Naive thymus-derived CD4-positive, alpha-beta T cell (primary cell): ENCODE measurements at regions of chr3 and their contacts with region 1.

Region 1: DNA sequence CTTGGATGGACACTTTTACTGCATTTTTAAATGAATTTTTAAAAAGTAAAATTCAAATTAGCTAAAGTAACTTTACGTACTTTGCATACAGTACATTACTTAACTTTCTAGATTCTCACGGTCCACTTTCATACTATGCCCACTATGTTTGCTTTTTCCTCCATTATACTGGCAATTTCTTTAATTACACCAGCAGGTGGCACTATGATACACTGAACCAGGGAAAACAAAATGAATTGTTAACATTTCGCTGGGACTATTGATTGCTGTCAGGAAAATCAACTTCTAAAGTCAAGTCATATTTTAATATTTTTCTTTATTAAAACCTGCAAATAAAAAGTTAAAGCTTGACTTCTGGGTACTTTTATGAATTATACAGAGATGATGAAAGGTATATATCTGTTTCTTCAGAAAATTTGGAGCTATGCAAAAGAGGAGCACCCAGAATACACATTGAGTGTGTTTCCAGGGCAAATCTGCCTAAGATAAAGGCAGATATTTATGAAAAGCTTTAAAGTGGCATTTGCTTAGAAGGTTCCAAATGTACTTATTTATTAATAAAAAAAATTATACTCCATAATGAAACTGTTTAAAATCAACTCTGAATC is 21.8 kb upstream of the POU1F1 start:
- DNase-seq: peak in 5 of 9 donors; percentile 24 to 38 (median 28)
- ATAC-seq: peak; percentile 67
- H3K4me3 ChIP-seq: no peak overlapping the region
- H3K4me3 Mint-ChIP-seq: no peak overlapping the region
- H3K27ac ChIP-seq: no peak overlapping the region
- H3K27ac Mint-ChIP-seq: no peak overlapping the region
- H3K4me1 ChIP-seq: no peaks in the 10 kb centered on the region
- H3K4me1 Mint-ChIP-seq: peaks cover 0 to 4% (median 0%) of the 10 kb centered on the region in 7 donors
- H3K27me3 ChIP-seq: no peaks in the 10 kb centered on the region
- H3K27me3 Mint-ChIP-seq: peaks cover 0 to 9% (median 0%) of the 10 kb centered on the region in 5 donors

Region 2: GRCh38 chr3:87350364-87351199 is 52.4 kb after region 1 on chr3:
- CTCF ChIA-PET with region 1: interaction called, 3 read pairs
- POLR2A ChIA-PET with region 1: no interaction called
- intact Hi-C with region 1: loop called in 1 of 2 experiments (anchors 1 kb)
- DNase-seq: peak in 7 of 9 donors; percentile 11 to 66 (median 47)
- ATAC-seq: peak; percentile 94
- H3K4me3 ChIP-seq: no peak overlapping the region
- H3K4me3 Mint-ChIP-seq: no peak overlapping the region
- H3K27ac ChIP-seq: no peak overlapping the region
- H3K27ac Mint-ChIP-seq: no peak overlapping the region
- H3K4me1 ChIP-seq: no peaks in the 10 kb centered on the region
- H3K4me1 Mint-ChIP-seq: no peaks in the 10 kb centered on the region
- H3K27me3 ChIP-seq: no peaks in the 10 kb centered on the region
- H3K27me3 Mint-ChIP-seq: peaks cover 0 to 8% (median 4%) of the 10 kb centered on the region in 5 donors

Region 3: DNA sequence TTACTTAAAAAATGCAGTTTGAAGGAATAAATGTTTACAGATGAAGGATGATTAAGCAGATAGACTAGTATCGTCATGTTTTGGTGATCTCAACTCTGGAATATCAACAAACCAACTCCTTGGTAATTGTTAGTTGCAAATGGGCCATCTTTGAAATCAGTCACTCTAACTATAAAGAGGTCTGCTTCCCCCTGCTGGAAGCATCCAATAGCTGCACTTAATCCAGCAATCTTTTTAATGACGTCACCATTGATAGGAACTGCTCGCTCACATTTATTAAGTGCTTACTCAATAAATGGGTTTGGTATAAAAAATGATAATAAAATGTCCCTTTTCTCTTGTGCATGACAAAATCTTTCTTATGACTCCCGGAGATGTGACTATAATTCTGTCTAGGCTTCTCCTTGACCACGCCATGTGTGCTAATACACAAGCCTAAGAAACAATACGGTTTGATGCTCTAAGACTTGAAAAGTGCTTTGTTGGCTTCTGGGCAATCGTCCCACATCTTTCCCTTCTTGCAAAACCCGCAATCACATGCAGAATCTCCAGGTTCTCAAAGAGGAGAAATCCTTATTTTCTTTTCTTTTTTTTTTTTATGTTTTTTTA is 205.8 kb after region 1 on chr3:
- CTCF ChIA-PET with region 1: no interaction called
- POLR2A ChIA-PET with region 1: no interaction called
- intact Hi-C with region 1: loop called in 1 of 2 experiments (anchors 1 kb)
- DNase-seq: peak in 1 of 9 donors; percentile 11
- ATAC-seq: peak; percentile 57
- H3K4me3 ChIP-seq: no peak overlapping the region
- H3K4me3 Mint-ChIP-seq: no peak overlapping the region
- H3K27ac ChIP-seq: no peak overlapping the region
- H3K27ac Mint-ChIP-seq: no peak overlapping the region
- H3K4me1 ChIP-seq: no peaks in the 10 kb centered on the region
- H3K4me1 Mint-ChIP-seq: no peaks in the 10 kb centered on the region
- H3K27me3 ChIP-seq: no peaks in the 10 kb centered on the region
- H3K27me3 Mint-ChIP-seq: no peaks in the 10 kb centered on the region

Region 4: DNA sequence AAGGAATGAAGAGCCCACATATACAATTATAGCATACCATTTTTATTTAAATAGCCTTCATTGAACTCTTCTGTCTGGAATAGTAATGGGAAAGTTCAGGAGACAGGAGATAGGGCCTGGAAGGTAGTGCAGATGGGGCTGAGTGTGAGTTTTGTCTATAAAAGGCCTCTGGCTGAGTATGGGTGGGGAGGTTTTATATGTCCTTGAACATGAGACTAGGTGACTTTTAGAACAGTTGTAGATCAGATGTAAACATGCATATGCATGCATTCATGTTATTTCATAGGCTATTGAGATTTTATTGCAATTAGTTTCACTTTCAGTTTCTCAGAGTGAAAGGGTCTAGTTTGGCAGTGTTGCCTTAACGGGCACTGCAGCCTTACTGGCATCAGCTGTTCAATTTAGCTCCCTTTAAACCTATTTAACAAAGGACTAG is 733.4 kb after region 1 on chr3:
- CTCF ChIA-PET with region 1: no interaction called
- POLR2A ChIA-PET with region 1: no interaction called
- intact Hi-C with region 1: no loop called
- DNase-seq: peak in 7 of 9 donors; percentile 29 to 54 (median 38)
- ATAC-seq: peak; percentile 76
- H3K4me3 ChIP-seq: peak overlapping the region; percentile 59
- H3K4me3 Mint-ChIP-seq: peak overlapping the region; percentile 78 to 91 (median 86)
- H3K27ac ChIP-seq: peak overlapping the region; percentile 66
- H3K27ac Mint-ChIP-seq: peak overlapping the region; percentile 82 to 95 (median 88)
- H3K4me1 ChIP-seq: peaks cover 11 to 17% of the 10 kb centered on the region in 2 donors
- H3K4me1 Mint-ChIP-seq: peaks cover 10 to 50% (median 48%) of the 10 kb centered on the region in 7 donors
- H3K27me3 ChIP-seq: no peaks in the 10 kb centered on the region
- H3K27me3 Mint-ChIP-seq: peaks cover 0 to under 1% (median 0%) of the 10 kb centered on the region in 5 donors

Region 5: DNA sequence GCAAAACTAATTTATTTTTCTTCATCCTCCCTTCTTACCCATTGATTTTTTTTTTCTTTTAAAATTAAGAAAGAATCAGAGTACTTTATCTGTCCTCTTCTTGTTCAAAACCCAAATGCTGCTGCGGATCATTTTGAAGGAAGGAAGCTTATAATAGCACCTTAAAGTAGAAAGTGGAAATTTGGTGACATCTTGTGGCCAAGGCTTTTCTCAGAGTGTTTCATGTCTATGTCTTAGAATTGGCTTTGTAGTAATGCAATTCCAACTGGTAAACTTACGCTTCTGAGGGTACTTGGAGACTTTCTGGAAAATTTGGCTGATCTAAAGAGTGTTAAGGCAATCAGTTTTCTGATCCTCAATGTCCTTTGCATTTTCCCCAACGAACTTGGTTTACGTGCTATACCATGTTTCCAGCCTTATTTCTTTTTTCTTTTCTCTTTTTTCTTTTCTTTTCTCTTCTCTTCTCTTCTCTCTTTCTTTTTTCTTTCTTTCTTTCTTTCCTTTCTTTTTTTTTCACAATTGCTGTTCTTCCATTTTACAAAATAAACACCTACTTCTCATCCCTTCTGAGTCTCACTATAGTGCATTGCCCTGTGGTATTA is 882.3 kb after region 1 on chr3:
- CTCF ChIA-PET with region 1: interaction called, 3 read pairs
- POLR2A ChIA-PET with region 1: no interaction called
- intact Hi-C with region 1: loop called (anchors 1 kb)
- DNase-seq: peak in 7 of 9 donors; percentile 9 to 38 (median 30)
- ATAC-seq: no peak
- H3K4me3 ChIP-seq: no peak overlapping the region
- H3K4me3 Mint-ChIP-seq: no peak overlapping the region
- H3K27ac ChIP-seq: no peak overlapping the region
- H3K27ac Mint-ChIP-seq: no peak overlapping the region
- H3K4me1 ChIP-seq: no peaks in the 10 kb centered on the region
- H3K4me1 Mint-ChIP-seq: peaks cover 0 to 8% (median 0%) of the 10 kb centered on the region in 7 donors
- H3K27me3 ChIP-seq: no peaks in the 10 kb centered on the region
- H3K27me3 Mint-ChIP-seq: peaks cover 0 to 14% (median 4%) of the 10 kb centered on the region in 5 donors

Region 6: DNA sequence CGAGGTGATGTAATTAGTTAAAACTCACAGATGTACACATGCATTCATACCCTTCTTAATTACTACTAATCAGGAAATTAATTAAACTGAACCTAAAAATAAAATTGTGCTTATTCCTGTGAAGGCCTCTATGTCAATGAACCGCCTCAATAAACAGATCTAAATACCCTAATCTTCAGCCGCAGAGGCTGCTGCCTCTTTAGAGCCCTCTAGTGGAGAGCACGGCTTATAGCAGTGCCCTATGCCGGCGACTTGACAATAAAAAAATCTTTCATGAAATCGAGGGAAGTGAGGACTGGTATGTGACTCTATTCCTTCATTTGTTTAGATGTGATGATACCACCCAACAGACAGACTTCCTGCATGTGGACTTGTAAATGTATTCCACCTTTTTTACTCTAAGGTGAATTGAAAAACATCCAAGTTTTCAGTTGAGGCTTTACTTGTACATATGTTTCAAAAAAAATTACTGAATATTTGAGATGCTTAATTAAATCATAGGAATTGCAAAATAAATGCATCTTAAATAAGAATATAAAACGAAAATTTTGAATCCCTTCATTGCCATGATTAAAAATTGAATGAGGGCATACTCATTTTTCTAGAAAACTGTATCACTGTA is 1800.9 kb after region 1 on chr3:
- CTCF ChIA-PET with region 1: no interaction called
- POLR2A ChIA-PET with region 1: no interaction called
- intact Hi-C with region 1: loop called in 1 of 2 experiments (anchors 2 kb)
- DNase-seq: peak in 6 of 9 donors; percentile 17 to 40 (median 30)
- ATAC-seq: peak; percentile 84
- H3K4me3 ChIP-seq: no peak overlapping the region
- H3K4me3 Mint-ChIP-seq: no peak overlapping the region
- H3K27ac ChIP-seq: no peak overlapping the region
- H3K27ac Mint-ChIP-seq: no peak overlapping the region
- H3K4me1 ChIP-seq: no peaks in the 10 kb centered on the region
- H3K4me1 Mint-ChIP-seq: peaks cover 0 to 2% (median 0%) of the 10 kb centered on the region in 7 donors
- H3K27me3 ChIP-seq: no peaks in the 10 kb centered on the region
- H3K27me3 Mint-ChIP-seq: peaks cover 0 to 5% (median 0%) of the 10 kb centered on the region in 5 donors